ENCODE measurements at regions of chr19 and their contacts with region 1.

Region 1: GRCh38 chr19:10717356-10718204 is at the start of gene DNM2:
- DNase-seq: peak; percentile 99
- H3K4me3 Mint-ChIP-seq: peak within 1 kb of the TSS; percentile 96
- H3K27ac Mint-ChIP-seq: peak within 1 kb of the TSS; percentile 84
- H3K4me1 Mint-ChIP-seq: peaks cover 31% of the 10 kb centered on the region
- H3K27me3 Mint-ChIP-seq: no peaks in the 10 kb centered on the region
- total RNA-seq, gene DNM2: 144 to 148 TPM

Region 2: GRCh38 chr19:10565567-10566407 is 151.8 kb before region 1 on chr19 and contains the start of gene KRI1:
- CTCF ChIA-PET with region 1: no interaction called
- intact Hi-C with region 1: loop called (anchors 1 kb)
- DNase-seq: peak; percentile 99
- H3K4me3 Mint-ChIP-seq: peak within 1 kb of the TSS; percentile 94
- H3K27ac Mint-ChIP-seq: peak within 1 kb of the TSS; percentile 98
- H3K4me1 Mint-ChIP-seq: peaks cover 49% of the 10 kb centered on the region
- H3K27me3 Mint-ChIP-seq: no peaks in the 10 kb centered on the region
- total RNA-seq, gene KRI1: 50.2 to 51.7 TPM

Region 3: GRCh38 chr19:10701955-10702525 is 15.5 kb before region 1 on chr19:
- CTCF ChIA-PET with region 1: interaction called, 15 read pairs
- intact Hi-C with region 1: no loop called
- DNase-seq: peak; percentile 48
- H3K4me3 Mint-ChIP-seq: peak overlapping the region; percentile 83
- H3K27ac Mint-ChIP-seq: peak overlapping the region; percentile 68
- H3K4me1 Mint-ChIP-seq: peaks cover 11% of the 10 kb centered on the region
- H3K27me3 Mint-ChIP-seq: peaks cover 6% of the 10 kb centered on the region

Region 4: DNA sequence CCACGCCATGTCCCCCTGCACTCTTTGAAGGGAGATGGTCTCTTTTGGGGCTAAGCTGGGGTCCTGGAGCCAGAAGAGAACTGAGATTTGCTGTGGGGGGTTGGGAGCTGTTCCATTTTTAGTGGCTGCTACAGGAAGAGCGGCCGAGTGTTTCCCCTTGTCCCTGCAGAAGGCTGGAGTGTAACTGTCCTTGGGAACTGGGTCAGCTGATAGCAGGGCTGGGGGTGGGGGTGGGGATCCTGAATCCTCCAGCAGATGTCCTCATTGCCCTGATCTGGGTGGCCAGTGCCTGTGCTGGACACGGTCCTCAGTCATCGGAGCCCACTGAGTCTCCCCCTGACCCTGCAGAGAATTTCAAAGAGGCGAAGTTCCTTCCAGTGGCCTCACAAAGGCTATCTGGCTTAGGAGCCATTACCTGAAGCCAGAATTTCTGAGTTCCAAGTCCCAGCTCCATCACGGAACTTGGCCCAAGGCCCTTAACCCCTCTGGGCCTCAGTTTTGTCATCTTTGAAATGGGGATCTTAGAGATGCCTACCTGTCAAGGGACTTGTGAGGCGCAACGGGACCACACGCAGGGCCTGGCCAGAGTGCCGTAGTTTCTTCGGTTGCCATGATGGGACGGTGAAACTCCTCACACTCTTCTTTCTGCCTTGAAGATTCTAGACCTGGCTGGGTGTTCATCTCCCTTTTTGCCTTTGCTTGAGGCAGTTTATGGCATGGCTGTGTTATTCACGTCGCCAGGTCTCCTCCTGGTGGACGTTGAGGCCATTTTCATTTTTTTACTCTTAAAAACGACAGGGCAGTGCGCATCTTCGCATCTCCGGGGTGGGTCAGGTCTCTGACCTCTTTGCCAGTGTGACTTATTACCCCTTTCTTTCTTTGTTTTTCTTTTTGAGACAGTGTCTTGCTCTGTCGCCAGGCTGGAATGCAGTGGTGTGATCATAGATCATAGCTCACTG is 52.2 kb after region 1 on chr19:
- CTCF ChIA-PET with region 1: interaction called, 18 read pairs
- intact Hi-C with region 1: loop called (anchors 1 kb)
- DNase-seq: no peak
- H3K4me3 Mint-ChIP-seq: no peak overlapping the region
- H3K27ac Mint-ChIP-seq: peak overlapping the region; percentile 60
- H3K4me1 Mint-ChIP-seq: peaks cover 13% of the 10 kb centered on the region
- H3K27me3 Mint-ChIP-seq: no peaks in the 10 kb centered on the region

Region 5: DNA sequence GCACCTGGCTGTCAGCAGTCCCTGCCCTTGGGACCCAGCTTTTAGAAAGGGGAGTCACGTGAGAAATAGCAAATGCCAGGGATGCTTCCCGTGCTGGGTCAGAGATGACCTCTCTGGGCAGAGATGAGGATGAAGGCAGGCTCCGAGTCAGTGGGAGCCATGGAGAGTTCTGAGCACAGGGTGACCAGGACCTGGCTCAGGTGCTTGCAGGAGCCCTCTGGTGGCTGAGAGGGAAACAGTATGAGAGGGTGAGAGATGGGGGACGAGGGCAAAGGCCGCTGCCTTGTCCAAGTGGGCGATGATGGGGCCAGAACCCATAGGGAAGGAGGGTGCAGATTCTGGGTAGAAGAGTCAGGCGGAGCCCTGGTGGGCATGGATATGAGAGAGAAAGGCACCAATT is 102.6 kb after region 1 on chr19:
- CTCF ChIA-PET with region 1: interaction called, 13 read pairs
- intact Hi-C with region 1: loop called (anchors 1 kb)
- DNase-seq: peak; percentile 33
- H3K4me3 Mint-ChIP-seq: no peak overlapping the region
- H3K27ac Mint-ChIP-seq: peak overlapping the region; percentile 57
- H3K4me1 Mint-ChIP-seq: no peaks in the 10 kb centered on the region
- H3K27me3 Mint-ChIP-seq: no peaks in the 10 kb centered on the region

Region 6: GRCh38 chr19:10864538-10864899 is 146.9 kb after region 1 on chr19:
- CTCF ChIA-PET with region 1: interaction called, 99 read pairs
- intact Hi-C with region 1: loop called (anchors 1 kb)
- DNase-seq: peak; percentile 94
- H3K4me3 Mint-ChIP-seq: no peak overlapping the region
- H3K27ac Mint-ChIP-seq: no peak overlapping the region
- H3K4me1 Mint-ChIP-seq: peaks cover 15% of the 10 kb centered on the region
- H3K27me3 Mint-ChIP-seq: no peaks in the 10 kb centered on the region

Region 7: DNA sequence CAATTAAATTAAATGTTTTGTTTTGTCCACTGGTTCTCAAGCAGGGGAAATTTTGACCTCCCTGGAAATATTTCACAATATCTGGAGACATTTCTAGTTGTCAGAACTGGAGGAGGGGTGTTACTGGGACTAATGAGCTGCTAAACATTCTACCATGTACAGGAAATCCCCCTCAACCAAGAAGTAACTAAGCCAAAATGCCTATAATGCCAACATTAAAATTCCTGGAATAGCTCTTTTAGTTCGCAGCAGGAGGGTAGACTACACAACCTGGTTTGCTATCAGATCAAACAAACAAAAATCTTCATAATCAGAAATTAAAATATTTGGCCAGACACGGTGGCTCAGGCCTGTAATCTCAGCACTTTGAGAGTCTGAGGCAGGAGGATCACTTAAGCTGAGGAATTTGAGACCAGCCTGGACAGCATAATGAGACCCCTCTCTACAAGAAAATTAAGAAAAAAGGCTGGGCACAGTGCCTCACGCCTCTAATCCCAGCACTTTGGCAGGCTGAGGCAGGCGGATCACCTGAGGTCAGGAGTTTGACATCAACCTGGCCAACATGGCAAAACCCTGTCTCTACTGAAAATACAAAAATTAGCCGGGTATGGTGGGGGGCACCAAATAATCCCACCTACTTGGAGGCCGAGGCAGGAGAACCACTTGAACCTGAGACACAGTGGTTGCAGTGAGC is 229.5 kb after region 1 on chr19:
- CTCF ChIA-PET with region 1: no interaction called
- intact Hi-C with region 1: no loop called
- DNase-seq: no peak
- H3K4me3 Mint-ChIP-seq: no peak overlapping the region
- H3K27ac Mint-ChIP-seq: no peak overlapping the region
- H3K4me1 Mint-ChIP-seq: peaks cover 3% of the 10 kb centered on the region
- H3K27me3 Mint-ChIP-seq: no peaks in the 10 kb centered on the region

Region 8: GRCh38 chr19:10968527-10969135 is 251.1 kb after region 1 on chr19:
- CTCF ChIA-PET with region 1: no interaction called
- intact Hi-C with region 1: no loop called
- DNase-seq: no peak
- H3K4me3 Mint-ChIP-seq: no peak overlapping the region
- H3K27ac Mint-ChIP-seq: no peak overlapping the region
- H3K4me1 Mint-ChIP-seq: peaks cover 47% of the 10 kb centered on the region
- H3K27me3 Mint-ChIP-seq: no peaks in the 10 kb centered on the region

Measured in activated naive CD4-positive, alpha-beta T cell treated with anti-CD3 and anti-CD28 coated beads for 36 hours (primary cell).